ENCODE measurements at regions of chrX and their contacts with region 1.

Region 1: DNA sequence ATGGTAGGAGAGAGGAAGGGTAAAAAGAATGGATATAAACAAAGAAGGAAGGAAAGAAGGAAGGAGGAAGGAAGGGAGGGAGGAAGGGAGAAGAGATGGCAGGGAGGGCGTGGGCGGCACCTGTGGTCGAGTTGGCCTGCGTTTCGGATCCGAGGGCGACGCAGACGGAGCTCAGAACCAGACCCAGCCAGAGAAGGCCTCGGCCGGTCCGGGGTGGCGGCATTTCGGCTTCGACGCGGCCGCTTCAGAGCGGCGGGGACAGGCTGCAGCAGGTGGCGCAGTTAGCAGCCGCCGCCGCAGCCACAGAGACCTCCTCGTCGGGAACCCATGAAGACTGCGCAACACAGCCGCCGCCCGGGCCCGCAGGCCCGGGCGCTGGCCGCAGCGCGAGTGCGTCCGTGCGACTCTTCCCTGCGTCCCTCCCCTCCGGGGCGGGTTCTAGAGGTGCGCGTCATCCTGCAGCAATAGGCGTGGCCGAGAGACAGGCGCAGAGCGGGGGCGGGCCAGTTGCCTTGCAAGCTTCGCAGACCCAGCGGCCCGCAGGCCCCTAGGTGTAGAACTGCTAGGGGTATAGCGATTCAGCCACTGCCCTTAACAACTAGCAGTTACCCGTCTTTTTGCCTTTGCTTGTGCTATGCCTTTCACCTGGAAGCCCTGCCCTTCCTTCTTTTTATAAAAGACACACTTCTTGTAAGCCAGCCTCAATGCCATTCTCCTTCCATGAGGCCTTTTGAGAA is at the start of gene IDS:
- DNase-seq: peak; percentile 89 to 93
- ATAC-seq: peak; percentile 96 to 98 (median 98)
- H3K4me3 ChIP-seq: peak within 1 kb of the TSS; percentile 76
- H3K27ac ChIP-seq: peak within 1 kb of the TSS; percentile 87
- H3K4me1 ChIP-seq: peaks cover 3% of the 10 kb centered on the region
- H3K27me3 ChIP-seq: no peaks in the 10 kb centered on the region
- CTCF ChIP-seq: no peak
- total RNA-seq, gene IDS: 29.3 to 37.6 (median 34.1) TPM

Region 2: DNA sequence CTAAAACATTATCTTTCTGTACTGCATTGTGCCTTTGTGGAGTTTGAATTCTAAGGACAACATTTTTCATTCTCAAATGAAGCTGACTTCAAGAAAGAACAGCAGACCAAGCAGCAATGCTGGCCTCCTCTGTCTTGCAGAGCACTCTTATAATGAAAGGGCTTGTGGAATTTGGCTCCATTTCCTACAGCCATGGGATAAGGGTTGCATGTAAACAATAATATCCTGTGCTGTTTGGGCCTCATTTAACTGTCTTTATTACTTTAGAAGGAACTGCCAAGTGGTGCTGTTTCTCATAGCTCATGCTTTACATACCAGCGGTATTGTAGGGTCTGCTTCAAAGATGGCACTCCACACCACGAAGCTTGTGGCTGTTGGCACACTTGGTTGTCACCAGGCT is 544.6 kb after region 1 on chrX:
- intact Hi-C with region 1: loop called in 1 of 2 experiments (anchors 10 kb)
- DNase-seq: no peak
- ATAC-seq: no peak
- H3K4me3 ChIP-seq: no peak overlapping the region
- H3K27ac ChIP-seq: no peak overlapping the region
- H3K4me1 ChIP-seq: no peaks in the 10 kb centered on the region
- H3K27me3 ChIP-seq: no peaks in the 10 kb centered on the region
- CTCF ChIP-seq: no peak

Measured in psoas muscle (tissue), 8 donors.